Esophagus muscularis mucosa (tissue), 4 donors: ENCODE measurements at regions of chr1 and their contacts with region 1.

Region 1: DNA sequence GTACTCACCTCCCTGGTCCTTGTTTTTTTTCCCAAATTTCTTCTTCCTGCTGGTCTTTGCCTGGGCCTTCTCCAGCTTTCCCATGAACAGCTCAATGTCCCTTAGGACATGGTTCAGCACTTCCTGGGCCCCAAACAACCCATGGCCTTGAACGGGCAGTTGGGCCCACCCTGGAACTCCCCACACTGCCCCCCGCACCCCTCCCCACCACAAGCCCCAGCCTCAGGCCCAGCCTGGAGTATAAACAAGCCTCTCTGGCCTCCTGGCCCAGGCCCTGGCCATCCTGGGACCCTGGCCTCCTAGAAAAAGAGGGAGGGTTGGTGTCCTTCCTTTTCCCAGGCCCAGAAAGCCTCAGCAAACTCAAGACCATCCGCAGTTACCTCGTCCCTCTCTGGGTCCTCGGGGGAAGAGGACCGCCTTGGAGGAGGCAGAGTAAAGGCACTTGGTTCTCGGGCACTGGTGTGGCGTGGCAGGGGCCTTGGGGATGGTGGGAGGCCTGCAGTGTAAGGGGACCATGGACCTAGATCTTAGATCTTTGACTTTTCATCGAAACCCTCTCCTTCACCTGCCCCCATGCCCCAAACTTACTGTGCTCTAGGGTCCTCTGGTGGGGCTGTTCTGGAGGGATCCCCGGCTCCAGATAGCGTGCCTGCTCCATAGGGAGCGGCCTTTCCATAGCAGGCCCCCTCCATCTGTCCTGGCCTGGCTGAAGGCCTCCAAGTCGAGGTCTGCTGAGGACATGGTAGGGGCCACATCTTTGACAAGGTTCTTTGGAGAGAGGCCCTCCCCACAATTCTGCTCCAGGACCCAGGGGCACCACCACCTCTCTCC is 5.6 kb downstream of the EPS8L3 start:
- DNase-seq: no peak
- H3K4me3 ChIP-seq: no peak overlapping the region
- H3K27ac ChIP-seq: no peak overlapping the region
- H3K4me1 ChIP-seq: peaks cover 0 to 3% (median 0%) of the 10 kb centered on the region in 4 donors
- H3K27me3 ChIP-seq: no peaks in the 10 kb centered on the region
- CTCF ChIP-seq: no peak
- EP300 ChIP-seq: no peak
- POLR2A ChIP-seq: no peak

Region 2: DNA sequence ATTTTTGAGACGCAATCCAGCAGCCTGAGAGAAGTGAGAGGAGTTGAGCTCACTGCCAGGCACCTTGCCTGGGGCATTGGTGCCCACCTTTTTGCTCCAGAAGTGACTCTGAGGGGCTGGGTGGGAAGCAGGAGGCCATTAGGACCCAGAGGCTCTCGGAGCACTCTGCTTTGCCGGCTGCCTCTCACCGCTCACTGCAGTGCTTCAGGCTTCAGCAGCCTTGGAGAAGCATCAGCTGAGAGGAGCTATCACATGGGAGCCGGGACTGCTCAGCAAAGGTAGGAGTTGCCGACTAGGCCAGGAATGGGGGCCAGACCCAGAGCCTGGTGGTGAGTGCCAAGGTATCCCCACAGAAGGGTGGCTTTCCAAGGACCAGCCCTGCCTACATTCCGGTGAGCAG is 218.5 kb before region 1 on chr1 and contains the start of gene GPR61:
- intact Hi-C with region 1: loop called (anchors 5 kb)
- DNase-seq: no peak
- H3K4me3 ChIP-seq: no peak within 1 kb of the TSS
- H3K27ac ChIP-seq: no peak within 1 kb of the TSS
- H3K4me1 ChIP-seq: peaks cover 13 to 18% (median 16%) of the 10 kb centered on the region in 4 donors
- H3K27me3 ChIP-seq: peaks cover 0 to 5% (median 0%) of the 10 kb centered on the region in 4 donors
- CTCF ChIP-seq: no peak
- EP300 ChIP-seq: no peak
- POLR2A ChIP-seq: no peak
- total RNA-seq, gene GPR61: not detected

Region 3: GRCh38 chr1:109704173-109704572 is 54.0 kb before region 1 on chr1:
- intact Hi-C with region 1: no loop called
- DNase-seq: no peak
- H3K4me3 ChIP-seq: no peak overlapping the region
- H3K27ac ChIP-seq: no peak overlapping the region
- H3K4me1 ChIP-seq: no peaks in the 10 kb centered on the region
- H3K27me3 ChIP-seq: no peaks in the 10 kb centered on the region
- CTCF ChIP-seq: no peak
- EP300 ChIP-seq: no peak
- POLR2A ChIP-seq: no peak

Region 4: DNA sequence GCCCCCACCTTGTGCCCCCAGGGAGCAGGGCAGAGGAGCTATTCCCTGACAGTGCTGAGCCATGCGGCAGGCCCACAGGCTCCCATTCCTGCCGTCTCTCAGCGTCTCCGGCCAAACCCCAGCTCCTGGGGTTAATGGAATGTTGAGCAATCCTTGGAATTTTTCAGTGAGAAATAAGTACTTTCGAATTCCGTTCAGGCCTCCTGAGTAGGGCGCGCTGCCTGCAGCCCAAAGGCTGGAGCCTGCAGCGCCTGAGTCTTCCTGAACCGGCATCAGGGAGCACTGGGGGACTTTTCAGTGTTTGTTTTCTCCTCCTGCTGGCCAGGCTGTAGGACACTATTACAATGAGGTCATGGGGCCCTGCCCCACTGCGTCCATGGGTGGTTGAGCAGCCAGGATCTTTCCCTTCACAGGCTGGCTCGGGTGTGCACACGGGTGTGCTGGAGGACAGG is 119.2 kb after region 1 on chr1:
- intact Hi-C with region 1: no loop called
- DNase-seq: peak; percentile 94
- H3K4me3 ChIP-seq: peak overlapping the region; percentile 11 to 33 (median 27)
- H3K27ac ChIP-seq: peak overlapping the region; percentile 81 to 91 (median 88)
- H3K4me1 ChIP-seq: peaks cover 31 to 53% (median 48%) of the 10 kb centered on the region in 4 donors
- H3K27me3 ChIP-seq: no peaks in the 10 kb centered on the region
- CTCF ChIP-seq: peak; percentile 9 to 41 (median 15)
- EP300 ChIP-seq: no peak
- POLR2A ChIP-seq: no peak

Region 5: DNA sequence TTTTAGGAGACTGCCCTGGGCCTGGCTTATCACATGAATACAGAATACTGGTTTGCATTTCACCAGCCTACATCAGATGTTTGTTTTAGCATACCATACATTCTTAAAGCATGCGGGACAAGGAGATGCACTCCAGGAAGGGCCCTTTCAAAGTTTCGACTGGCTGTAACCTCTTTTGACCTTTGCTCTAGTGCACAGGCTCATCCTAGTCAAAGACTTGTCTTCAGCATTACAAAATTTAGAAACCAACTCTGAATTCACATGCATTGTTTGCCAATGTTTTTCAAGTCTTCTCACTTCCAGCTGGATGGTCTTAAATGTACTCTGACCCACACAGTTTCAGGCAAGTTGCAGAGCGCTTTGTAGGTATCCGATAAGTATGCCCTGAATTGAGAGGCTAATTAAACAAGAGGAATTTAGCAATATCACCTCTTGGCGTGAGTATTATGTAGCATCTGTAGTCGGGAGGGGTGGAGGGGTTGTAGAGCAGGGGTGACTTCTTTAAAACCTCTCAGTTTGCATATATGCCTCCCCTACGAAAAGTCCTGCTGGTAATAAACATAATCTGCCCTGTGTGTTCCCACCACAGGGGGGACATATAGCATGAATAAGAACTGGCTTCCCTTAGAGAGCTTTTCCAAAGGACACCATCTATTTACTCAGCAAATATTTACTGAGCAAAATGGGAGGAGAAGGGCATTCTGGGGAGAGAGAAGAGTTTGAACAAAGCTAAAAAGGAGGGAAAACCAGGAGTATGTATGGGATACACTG is 202.0 kb after region 1 on chr1:
- intact Hi-C with region 1: no loop called
- DNase-seq: no peak
- H3K4me3 ChIP-seq: no peak overlapping the region
- H3K27ac ChIP-seq: peak overlapping the region in 1 of 4 donors; percentile 11
- H3K4me1 ChIP-seq: peaks cover 13 to 19% (median 16%) of the 10 kb centered on the region in 4 donors
- H3K27me3 ChIP-seq: no peaks in the 10 kb centered on the region
- CTCF ChIP-seq: no peak
- EP300 ChIP-seq: no peak
- POLR2A ChIP-seq: no peak